ENCODE measurements at regions of chr11 and their contacts with region 1.

Region 1: DNA sequence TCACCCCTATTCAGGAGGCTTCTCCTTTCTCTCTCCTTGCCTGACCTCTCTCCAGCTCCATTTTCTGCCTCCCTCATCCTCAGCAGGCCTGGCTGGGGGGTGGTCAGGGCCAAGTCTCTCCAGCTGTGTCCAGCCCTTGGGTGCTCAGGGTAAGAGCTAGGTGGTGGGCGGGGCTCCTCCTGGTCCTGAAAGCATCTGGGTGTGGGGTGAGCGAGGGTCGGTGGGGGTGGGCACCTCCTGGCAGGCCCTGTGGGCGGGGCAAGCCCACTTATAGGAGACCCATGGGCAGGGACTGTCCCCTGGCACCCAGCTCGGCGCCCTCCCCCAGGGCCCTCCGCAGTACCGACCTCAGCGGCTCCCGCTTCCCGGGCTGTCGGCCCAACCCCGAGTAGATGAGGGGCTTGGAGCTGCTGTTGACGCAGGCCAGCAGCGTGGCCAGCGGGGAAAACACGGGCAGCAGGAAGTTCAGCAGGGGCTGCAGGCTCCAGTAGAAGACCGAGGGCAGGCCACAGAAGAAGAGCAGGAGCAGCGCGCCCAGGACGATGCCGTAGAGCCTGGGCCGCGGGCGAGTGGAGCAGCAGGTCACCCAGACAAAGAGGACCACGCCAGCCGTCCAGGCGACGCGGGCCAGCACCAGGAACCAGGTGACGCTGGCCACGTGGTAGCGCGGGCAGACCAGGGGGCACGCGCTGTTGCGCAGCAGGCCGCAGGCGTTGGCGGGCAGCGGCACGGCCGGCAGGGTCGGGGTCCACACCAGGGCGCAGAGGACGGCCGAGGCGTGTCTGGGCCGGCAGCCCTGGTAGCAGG is 734 bp downstream of the MRGPRG start:
- DNase-seq: no peak
- H3K4me3 ChIP-seq: peak overlapping the region in 1 of 2 donors; percentile 20
- H3K27ac ChIP-seq: no peak overlapping the region
- H3K4me1 ChIP-seq: no peaks in the 10 kb centered on the region
- H3K27me3 ChIP-seq: no peaks in the 10 kb centered on the region
- CTCF ChIP-seq: no peak
- POLR2A ChIP-seq: no peak

Region 2: GRCh38 chr11:2930704-2931428 is 287.0 kb before region 1 on chr11:
- intact Hi-C with region 1: no loop called
- DNase-seq: peak; percentile 69
- H3K4me3 ChIP-seq: no peak overlapping the region
- H3K27ac ChIP-seq: no peak overlapping the region
- H3K4me1 ChIP-seq: peaks cover 12% of the 10 kb centered on the region
- H3K27me3 ChIP-seq: no peaks in the 10 kb centered on the region
- CTCF ChIP-seq: peak; percentile 6 to 53 (median 50)
- POLR2A ChIP-seq: no peak

Region 3: GRCh38 chr11:3109921-3110706 is 107.8 kb before region 1 on chr11:
- intact Hi-C with region 1: loop called (anchors 10 kb)
- DNase-seq: no peak
- H3K4me3 ChIP-seq: no peak overlapping the region
- H3K27ac ChIP-seq: no peak overlapping the region
- H3K4me1 ChIP-seq: no peaks in the 10 kb centered on the region
- H3K27me3 ChIP-seq: no peaks in the 10 kb centered on the region
- CTCF ChIP-seq: peak in 2 of 3 experiments; percentile 41 to 54
- POLR2A ChIP-seq: no peak

Region 4: GRCh38 chr11:3195251-3196160 is 22.4 kb before region 1 on chr11:
- intact Hi-C with region 1: no loop called
- DNase-seq: no peak
- H3K4me3 ChIP-seq: no peak overlapping the region
- H3K27ac ChIP-seq: no peak overlapping the region
- H3K4me1 ChIP-seq: no peaks in the 10 kb centered on the region
- H3K27me3 ChIP-seq: no peaks in the 10 kb centered on the region
- CTCF ChIP-seq: peak in 2 of 3 experiments; percentile 23 to 30
- POLR2A ChIP-seq: no peak

Region 5: GRCh38 chr11:4551346-4551979 is 1333.6 kb after region 1 on chr11:
- intact Hi-C with region 1: no loop called
- DNase-seq: no peak
- H3K4me3 ChIP-seq: no peak overlapping the region
- H3K27ac ChIP-seq: no peak overlapping the region
- H3K4me1 ChIP-seq: no peaks in the 10 kb centered on the region
- H3K27me3 ChIP-seq: no peaks in the 10 kb centered on the region
- CTCF ChIP-seq: no peak
- POLR2A ChIP-seq: no peak

Measured in testis (tissue), 5 donors.